Dorsolateral prefrontal cortex (tissue), 120 donors: ENCODE measurements at regions of chr9 and their contacts with region 1.

Region 1: GRCh38 chr9:97921959-97922724 is at the start of gene TRMO:
- DNase-seq: peak; percentile 93 to 99 (median 96)
- H3K4me3 ChIP-seq: peak within 1 kb of the TSS; percentile 49 to 99 (median 77)
- H3K27ac ChIP-seq: peak within 1 kb of the TSS; percentile 93 to 100 (median 100)
- H3K27me3 ChIP-seq: no peaks in the 10 kb centered on the region
- CTCF ChIP-seq: peak; percentile 65 to 99 (median 92)
- total RNA-seq, gene TRMO: 8.6 to 30.0 (median 17.0) TPM

Region 2: DNA sequence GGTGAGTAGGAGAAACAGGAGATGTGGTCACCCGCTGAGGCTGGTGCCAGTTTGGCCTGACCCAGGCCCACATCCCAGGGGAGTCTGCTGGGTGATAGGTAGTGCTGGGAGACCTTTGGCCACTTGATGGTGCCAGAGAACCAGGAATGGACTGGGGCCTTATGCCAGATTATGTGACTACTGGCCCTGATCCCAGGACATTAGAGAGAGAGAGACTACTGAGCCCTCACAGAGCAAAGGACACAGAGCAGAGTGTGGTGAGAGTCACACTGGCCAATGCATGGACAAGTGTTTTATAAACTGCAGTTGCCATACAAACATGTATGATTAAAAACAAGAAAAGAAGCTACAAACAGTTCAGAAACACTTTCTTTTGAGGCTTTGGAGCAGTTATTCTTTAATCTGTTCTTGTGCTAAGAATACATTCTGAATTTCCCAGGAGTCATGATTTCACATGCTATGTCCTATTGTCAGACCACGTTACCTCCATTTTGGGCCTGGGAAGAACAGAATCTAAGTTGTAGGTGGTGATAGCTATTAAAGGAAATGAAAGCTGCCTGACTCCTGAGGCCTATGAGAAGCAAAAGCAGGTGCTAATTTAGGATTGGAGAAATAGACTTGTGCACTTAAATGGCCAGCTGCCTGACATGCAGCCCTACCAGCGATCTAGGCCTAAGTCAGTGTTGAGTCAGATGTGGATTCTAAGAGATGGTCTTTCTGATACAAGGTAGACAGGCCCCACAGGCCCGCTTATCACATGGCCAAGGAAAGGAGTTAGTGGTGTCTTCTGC is 453.3 kb before region 1 on chr9:
- intact Hi-C with region 1: loop called in 1 of 2 experiments (anchors 10 kb)
- DNase-seq: peak; percentile 60 to 91 (median 80)
- H3K4me3 ChIP-seq: peak overlapping the region in 1 of 59 donors; percentile 4
- H3K27ac ChIP-seq: peak overlapping the region; percentile 6 to 93 (median 85)
- H3K27me3 ChIP-seq: no peaks in the 10 kb centered on the region
- CTCF ChIP-seq: peak; percentile 49 to 98 (median 90)

Region 3: DNA sequence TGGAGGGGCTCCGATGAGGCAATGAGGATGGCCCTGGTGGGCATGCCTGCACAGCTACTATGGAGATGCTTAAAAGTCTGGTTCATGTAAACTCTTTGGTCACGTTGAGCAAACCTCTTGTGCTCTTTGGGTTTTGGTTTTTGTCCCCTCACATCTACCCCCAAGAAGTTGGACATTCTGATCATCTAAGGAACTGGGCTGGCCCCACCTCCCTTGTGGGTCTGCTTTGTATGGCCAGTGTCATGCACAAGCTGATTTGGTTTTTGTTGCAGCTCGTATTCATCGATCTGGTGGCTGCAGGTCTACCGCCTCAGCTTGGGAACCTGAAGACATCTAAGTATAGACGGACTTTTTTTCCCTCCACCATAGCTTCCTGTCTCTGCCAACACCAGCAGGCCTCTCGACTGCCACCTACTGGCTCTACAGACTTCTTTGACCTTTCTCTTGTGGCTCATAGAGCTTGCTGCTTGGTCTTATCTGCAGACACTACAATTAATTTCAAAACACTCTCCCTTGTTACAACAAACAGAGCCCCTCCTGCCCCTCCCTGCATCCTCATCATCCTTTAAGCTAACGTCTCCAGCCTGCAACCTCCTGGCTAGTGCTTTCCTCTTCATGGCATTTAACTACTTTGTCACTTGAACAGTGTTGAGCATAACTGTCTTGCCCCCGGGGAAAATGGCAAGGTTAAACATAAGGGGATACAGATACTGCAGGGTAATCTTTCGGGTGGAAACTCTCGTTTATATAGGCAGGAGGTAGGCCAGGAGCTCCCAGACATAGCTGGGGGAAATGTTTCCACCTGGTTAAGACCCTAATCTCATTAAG is 323.5 kb before region 1 on chr9:
- intact Hi-C with region 1: no loop called
- DNase-seq: peak; percentile 44 to 88 (median 74)
- H3K4me3 ChIP-seq: no peak overlapping the region
- H3K27ac ChIP-seq: peak overlapping the region in 33 of 59 donors; percentile 3 to 94 (median 40)
- H3K27me3 ChIP-seq: no peaks in the 10 kb centered on the region
- CTCF ChIP-seq: peak; percentile 60 to 92 (median 85)

Region 4: GRCh38 chr9:97696803-97697601 is 225.1 kb before region 1 on chr9 and contains the start of gene XPA:
- intact Hi-C with region 1: loop called in 1 of 2 experiments (anchors 5 kb)
- DNase-seq: peak; percentile 89 to 98 (median 94)
- H3K4me3 ChIP-seq: peak within 1 kb of the TSS; percentile 64 to 99 (median 89)
- H3K27ac ChIP-seq: peak within 1 kb of the TSS; percentile 77 to 99 (median 94)
- H3K27me3 ChIP-seq: no peaks in the 10 kb centered on the region
- CTCF ChIP-seq: peak in 30 of 56 donors; percentile 12 to 56 (median 34)
- total RNA-seq, gene XPA: 12.5 to 32.8 (median 21.9) TPM

Region 5: GRCh38 chr9:97900738-97901565 is 21.2 kb before region 1 on chr9:
- intact Hi-C with region 1: no loop called
- DNase-seq: peak in 2 of 10 donors; percentile 20 to 59
- H3K4me3 ChIP-seq: no peak overlapping the region
- H3K27ac ChIP-seq: no peak overlapping the region
- H3K27me3 ChIP-seq: no peaks in the 10 kb centered on the region
- CTCF ChIP-seq: peak; percentile 35 to 81 (median 70)

Region 6: GRCh38 chr9:98034593-98035546 is 112.7 kb after region 1 on chr9:
- intact Hi-C with region 1: loop called (anchors 2 kb)
- DNase-seq: peak; percentile 65 to 88 (median 76)
- H3K4me3 ChIP-seq: peak overlapping the region in 25 of 59 donors; percentile 6 to 47 (median 25)
- H3K27ac ChIP-seq: no peak overlapping the region
- H3K27me3 ChIP-seq: no peaks in the 10 kb centered on the region
- CTCF ChIP-seq: peak; percentile 57 to 93 (median 86)

Region 7: DNA sequence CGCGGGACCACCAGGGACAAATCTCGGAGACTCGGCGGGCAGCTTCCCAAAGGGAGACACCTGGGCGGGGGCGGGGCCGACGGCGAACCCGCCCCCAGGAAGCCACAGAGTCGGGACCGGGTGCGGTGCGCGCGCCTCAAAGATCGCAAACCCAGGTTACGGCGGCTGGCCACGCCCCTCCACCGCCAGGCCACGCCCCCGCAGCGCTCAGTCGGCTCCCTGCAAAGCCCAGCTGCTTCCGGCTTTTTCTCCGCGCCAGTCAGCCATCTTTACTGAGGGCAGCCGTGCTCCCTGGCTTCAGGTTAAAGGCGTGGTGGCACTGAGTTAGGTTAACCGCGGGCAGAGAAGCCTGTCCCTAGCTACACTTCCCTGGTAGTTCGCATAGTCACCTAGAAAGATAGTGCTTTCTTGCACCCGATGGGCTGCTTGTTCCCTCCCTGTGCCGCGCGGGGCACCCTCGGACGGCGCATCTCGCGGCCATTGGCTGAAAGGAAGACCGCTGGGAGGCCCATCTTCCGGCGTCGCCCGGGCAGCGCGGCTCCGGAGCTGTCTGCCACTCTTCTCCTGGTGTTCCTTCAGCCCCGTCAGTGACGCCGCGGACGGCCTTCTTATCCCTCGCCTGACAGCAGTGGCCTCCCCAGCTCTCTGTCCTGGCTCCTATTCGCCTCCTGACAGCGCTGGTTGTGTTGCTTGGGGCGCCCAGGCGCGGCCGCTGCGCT is 333.6 kb after region 1 on chr9 and contains the start of gene TBC1D2:
- intact Hi-C with region 1: loop called (anchors 2 kb)
- DNase-seq: peak; percentile 89 to 94 (median 93)
- H3K4me3 ChIP-seq: peak within 1 kb of the TSS; percentile 58 to 99 (median 88)
- H3K27ac ChIP-seq: peak within 1 kb of the TSS; percentile 87 to 99 (median 97)
- H3K27me3 ChIP-seq: no peaks in the 10 kb centered on the region
- CTCF ChIP-seq: peak in 46 of 56 donors; percentile 2 to 61 (median 40)
- total RNA-seq, gene TBC1D2: 5.7 to 45.5 (median 12.8) TPM

Region 8: GRCh38 chr9:98796364-98797101 is 874.4 kb after region 1 on chr9 and contains the start of gene ANKS6:
- intact Hi-C with region 1: loop called in 1 of 2 experiments (anchors 10 kb)
- DNase-seq: peak; percentile 60 to 91 (median 76)
- H3K4me3 ChIP-seq: peak within 1 kb of the TSS; percentile 49 to 88 (median 78)
- H3K27ac ChIP-seq: peak within 1 kb of the TSS; percentile 56 to 97 (median 90)
- H3K27me3 ChIP-seq: no peaks in the 10 kb centered on the region
- CTCF ChIP-seq: peak in 53 of 56 donors; percentile 22 to 75 (median 49)
- total RNA-seq, gene ANKS6: 21.8 to 47.3 (median 33.7) TPM